BJ (cell line): ENCODE measurements at regions of chr20 and their contacts with region 1.

Region 1: DNA sequence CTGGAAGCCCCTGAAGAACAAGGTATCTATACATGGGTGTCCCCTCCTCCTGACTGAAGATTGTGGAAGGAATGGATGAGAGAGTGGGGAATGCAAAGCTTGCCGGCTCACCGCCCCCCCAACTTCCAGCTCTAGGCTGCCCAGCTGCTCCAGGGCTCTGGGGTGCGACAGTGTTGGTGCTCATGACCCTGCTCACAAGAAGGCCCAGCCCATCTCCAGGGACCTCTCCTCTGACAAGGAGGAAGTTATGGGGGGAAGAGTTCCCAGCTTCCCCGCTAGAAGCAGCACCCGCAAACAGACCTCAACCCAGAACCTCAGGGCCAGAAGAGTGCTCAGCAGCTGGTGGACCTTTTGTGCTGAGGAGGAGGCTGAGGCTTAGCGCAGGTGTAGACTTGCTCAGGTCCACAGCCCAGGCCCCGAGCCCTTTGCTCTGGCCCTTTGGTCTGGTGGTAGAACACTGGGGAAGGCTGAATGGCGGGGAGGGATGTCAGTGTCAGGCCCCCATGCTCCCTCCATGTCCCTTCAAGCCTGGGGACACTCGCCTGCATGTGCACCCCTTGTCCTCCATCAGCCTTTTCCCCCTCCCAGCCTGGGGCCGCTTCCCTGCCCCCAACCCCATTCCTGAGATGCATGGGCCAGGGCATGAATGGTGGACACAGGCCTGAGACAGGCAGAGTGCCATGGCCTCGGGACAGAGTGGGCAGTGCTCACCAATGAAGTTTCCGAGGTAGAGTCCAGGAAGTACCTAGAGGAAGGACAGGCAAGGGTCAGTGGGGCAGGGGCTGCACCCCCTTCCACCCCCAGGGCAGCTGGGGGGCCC is 1.3 kb downstream of the DUSP15 start:
- DNase-seq: no peak
- H3K4me3 ChIP-seq: no peak overlapping the region
- H3K27me3 ChIP-seq: peaks cover 37% of the 10 kb centered on the region
- CTCF ChIP-seq: no peak

Region 2: DNA sequence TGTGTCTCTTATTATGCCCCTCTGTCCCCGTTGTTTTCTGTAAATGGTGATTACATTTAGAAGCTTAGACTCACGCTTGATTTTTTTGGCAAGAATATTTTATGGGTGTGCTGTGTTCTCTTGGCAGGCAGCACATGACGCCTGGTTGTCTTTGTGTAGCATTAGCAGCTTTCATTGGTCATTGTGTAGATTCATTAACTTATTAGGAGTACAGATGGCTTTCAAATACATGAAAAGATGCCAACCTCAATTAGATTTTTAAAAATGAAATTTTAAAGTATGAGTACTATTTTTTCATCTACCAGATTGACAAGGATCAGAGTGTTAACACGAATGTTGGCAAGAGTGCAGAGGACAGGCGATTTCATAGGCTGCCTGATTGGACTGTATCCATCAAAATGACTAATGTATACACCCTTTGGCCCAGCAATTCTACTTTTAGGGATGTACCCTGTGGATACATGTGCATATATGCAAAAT is 216.1 kb before region 1 on chr20:
- CTCF ChIA-PET with region 1: no interaction called
- POLR2A ChIA-PET with region 1: no interaction called
- DNase-seq: peak; percentile 39
- H3K4me3 ChIP-seq: no peak overlapping the region
- H3K27me3 ChIP-seq: no peaks in the 10 kb centered on the region
- CTCF ChIP-seq: no peak

Region 3: DNA sequence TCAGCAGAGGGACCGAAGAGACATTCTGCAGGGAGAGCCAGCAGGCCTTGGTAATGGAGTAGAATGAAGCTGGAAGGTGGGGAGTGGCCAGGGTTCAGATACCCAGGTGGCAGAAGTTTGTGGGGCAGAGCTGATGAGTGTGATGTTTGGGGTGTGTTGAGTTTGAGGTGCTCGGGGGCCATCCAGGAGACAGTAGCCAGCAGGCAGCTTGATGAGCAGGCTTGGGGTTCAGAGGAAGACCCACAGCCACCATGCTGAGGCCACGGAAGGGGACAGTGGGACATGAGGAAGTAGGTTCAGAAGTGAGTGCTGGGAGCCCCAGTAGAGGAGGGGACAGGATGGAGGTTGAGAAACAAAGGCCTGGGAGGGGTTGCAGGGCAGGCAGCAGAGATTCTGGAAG is 12.5 kb before region 1 on chr20:
- CTCF ChIA-PET with region 1: interaction called, 54 read pairs
- POLR2A ChIA-PET with region 1: no interaction called
- DNase-seq: no peak
- H3K4me3 ChIP-seq: no peak overlapping the region
- H3K27me3 ChIP-seq: peaks cover 44% of the 10 kb centered on the region
- CTCF ChIP-seq: no peak